Naive thymus-derived CD4-positive, alpha-beta T cell (primary cell): ENCODE measurements at regions of chr12 and their contacts with region 1.

Region 1: DNA sequence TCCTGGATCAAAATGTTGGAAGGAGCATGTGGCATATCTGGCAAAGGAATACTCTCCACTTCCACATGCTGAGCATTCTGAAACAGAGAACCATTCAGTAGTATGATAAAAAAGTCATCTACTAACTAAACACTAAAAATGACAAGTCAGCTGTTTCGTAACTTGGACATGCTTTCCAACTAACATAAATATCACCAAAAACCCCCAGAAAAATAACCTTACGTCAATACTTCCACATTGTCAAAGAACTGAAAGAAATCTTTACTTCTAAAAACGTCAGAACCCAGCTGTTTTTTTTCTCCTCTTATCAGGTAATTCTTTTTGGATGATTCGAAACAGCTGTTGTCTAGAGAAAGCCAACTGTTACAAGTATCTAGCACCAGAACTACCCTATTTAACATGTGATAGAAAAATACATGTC is 8.2 kb downstream of the WBP11 start:
- DNase-seq: no peak
- ATAC-seq: no peak
- H3K4me3 ChIP-seq: no peak overlapping the region
- H3K4me3 Mint-ChIP-seq: no peak overlapping the region
- H3K27ac ChIP-seq: no peak overlapping the region
- H3K27ac Mint-ChIP-seq: peak overlapping the region in 2 of 9 donors; percentile 32 to 48
- H3K4me1 ChIP-seq: no peaks in the 10 kb centered on the region
- H3K4me1 Mint-ChIP-seq: peaks cover 0 to 14% (median 9%) of the 10 kb centered on the region in 7 donors
- H3K27me3 ChIP-seq: no peaks in the 10 kb centered on the region
- H3K27me3 Mint-ChIP-seq: no peaks in the 10 kb centered on the region

Region 2: GRCh38 chr12:14723763-14724162 is 71.3 kb before region 1 on chr12:
- CTCF ChIA-PET with region 1: no interaction called
- POLR2A ChIA-PET with region 1: no interaction called
- intact Hi-C with region 1: loop called in 1 of 2 experiments (anchors 1 kb)
- DNase-seq: peak; percentile 19 to 67 (median 59)
- ATAC-seq: peak; percentile 83
- H3K4me3 ChIP-seq: no peak overlapping the region
- H3K4me3 Mint-ChIP-seq: no peak overlapping the region
- H3K27ac ChIP-seq: no peak overlapping the region
- H3K27ac Mint-ChIP-seq: no peak overlapping the region
- H3K4me1 ChIP-seq: no peaks in the 10 kb centered on the region
- H3K4me1 Mint-ChIP-seq: peaks cover 0 to 4% (median 0%) of the 10 kb centered on the region in 7 donors
- H3K27me3 ChIP-seq: no peaks in the 10 kb centered on the region
- H3K27me3 Mint-ChIP-seq: peaks cover 0 to 34% (median 10%) of the 10 kb centered on the region in 5 donors

Region 3: DNA sequence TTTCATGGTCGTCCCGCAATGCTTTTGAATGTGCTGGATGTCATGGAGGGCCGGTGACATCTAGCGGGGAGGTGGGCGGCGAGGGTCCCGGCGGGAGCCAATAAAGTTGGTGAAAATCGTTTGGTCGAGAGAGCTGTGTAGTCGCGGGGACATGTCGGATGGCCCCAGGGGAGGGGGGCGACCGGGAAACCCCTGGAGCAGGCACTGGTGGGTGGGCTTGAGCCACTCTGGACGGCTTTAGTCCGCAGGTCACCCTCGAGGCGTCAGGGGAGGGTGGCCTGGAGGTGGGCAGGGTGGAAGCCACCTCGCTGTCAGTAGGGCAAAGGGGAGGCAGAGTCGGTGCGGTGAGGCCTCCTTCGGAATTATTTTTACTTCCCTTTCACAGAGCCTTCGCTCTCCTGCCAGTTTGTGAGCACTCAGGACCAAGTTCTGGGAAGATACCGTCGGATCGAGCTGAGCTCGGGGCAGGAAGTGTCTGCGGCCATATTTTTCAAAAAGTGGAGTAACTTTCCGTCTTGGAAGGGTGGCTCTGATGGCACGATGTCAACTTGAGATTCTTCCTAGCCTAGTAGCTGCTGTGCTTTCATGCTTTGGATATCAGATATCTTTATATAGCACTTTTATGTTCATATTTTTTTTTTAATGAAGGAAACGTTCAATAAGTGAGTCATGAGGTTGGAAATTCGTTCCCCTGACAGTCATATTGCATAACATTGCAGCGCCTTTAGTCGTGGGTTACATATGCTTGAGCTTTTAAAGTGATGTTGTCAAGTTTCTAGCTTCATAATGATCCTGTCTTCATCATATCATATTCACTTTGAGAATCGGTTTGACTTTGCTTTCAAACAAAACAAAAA is 19.9 kb before region 1 on chr12:
- CTCF ChIA-PET with region 1: interaction called, 6 read pairs
- POLR2A ChIA-PET with region 1: interaction called, 316 read pairs
- intact Hi-C with region 1: loop called (anchors 2 kb)
- DNase-seq: peak; percentile 14 to 54 (median 27)
- ATAC-seq: no peak
- H3K4me3 ChIP-seq: peak overlapping the region; percentile 79
- H3K4me3 Mint-ChIP-seq: peak overlapping the region; percentile 94 to 100 (median 100)
- H3K27ac ChIP-seq: peak overlapping the region; percentile 87
- H3K27ac Mint-ChIP-seq: peak overlapping the region; percentile 96 to 100 (median 99)
- H3K4me1 ChIP-seq: peaks cover 11 to 14% of the 10 kb centered on the region in 2 donors
- H3K4me1 Mint-ChIP-seq: peaks cover 19 to 58% (median 47%) of the 10 kb centered on the region in 7 donors
- H3K27me3 ChIP-seq: no peaks in the 10 kb centered on the region
- H3K27me3 Mint-ChIP-seq: peaks cover 0 to 10% (median 0%) of the 10 kb centered on the region in 5 donors

Region 4: DNA sequence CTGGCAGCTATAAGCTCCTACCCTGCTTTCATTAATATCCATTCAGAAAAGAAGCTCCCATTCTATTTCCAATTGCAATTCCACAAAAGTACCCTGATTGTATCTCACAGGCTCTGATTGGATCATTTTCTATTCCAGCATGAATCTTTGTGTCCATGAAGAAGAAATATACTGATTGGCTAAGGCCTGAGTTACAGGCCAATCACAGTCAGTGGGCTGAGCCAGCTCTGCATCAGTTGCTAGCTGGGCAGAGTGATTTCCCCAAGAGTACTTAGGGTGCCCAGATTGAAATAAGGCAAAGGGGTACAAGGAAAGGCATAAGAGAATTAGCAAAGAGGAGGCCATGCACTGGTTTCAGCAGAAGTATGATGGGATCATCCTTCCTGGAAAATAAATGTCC is 33.9 kb after region 1 on chr12:
- CTCF ChIA-PET with region 1: no interaction called
- POLR2A ChIA-PET with region 1: no interaction called
- intact Hi-C with region 1: no loop called
- DNase-seq: no peak
- ATAC-seq: no peak
- H3K4me3 ChIP-seq: no peak overlapping the region
- H3K4me3 Mint-ChIP-seq: no peak overlapping the region
- H3K27ac ChIP-seq: no peak overlapping the region
- H3K27ac Mint-ChIP-seq: no peak overlapping the region
- H3K4me1 ChIP-seq: no peaks in the 10 kb centered on the region
- H3K4me1 Mint-ChIP-seq: no peaks in the 10 kb centered on the region
- H3K27me3 ChIP-seq: no peaks in the 10 kb centered on the region
- H3K27me3 Mint-ChIP-seq: peaks cover 11 to 14% (median 12%) of the 10 kb centered on the region in 5 donors